ENCODE measurements at regions of chr6 and their contacts with region 1.

Region 1: DNA sequence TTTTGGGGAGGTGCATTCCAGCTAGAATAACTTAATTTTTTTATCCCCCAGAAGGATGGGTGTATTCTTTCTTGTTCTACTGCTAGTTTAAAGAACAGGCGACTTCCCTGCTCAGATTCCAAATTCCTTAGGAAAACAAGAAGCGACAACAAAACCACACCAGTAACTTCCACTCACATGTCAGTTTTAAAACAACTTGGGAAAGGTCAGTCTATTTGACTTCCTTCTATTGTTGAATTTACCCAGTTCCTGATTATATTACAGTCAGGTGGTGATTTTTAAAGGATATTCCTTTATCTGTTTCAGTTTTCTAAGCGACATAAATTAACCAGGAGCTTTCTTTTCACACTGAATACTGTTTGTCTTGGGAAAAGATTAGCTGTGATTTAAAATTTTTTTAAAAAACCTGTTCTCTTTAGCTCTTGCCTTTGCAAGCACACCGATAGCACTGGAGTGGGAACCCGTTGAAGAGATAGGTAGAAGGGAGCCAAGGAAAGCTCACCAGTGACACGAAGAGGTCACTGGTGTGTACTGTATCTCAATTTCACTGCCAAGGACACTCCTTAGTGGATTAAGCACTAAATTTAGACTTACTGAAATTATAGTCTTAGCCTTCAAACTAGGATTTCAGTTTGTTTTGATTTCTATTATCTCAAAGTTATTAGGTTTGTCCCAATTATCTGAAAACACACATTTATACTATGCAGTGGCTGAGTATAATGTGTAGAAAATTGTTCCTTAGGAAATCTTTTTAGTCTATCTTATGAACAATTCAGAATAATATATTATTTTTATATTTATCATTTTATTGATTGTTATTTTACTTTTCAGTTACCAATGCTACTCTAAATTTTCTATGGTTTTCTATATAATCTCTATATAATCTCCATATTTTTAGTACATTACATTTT is 22.3 kb downstream of the MARCKS start:
- DNase-seq: peak in 4 of 5 donors; percentile 36 to 54 (median 44)
- ATAC-seq: peak; percentile 96 to 99 (median 98)
- H3K4me3 ChIP-seq: peak overlapping the region in 8 of 12 donors; percentile 4 to 30 (median 20)
- H3K27ac ChIP-seq: peak overlapping the region in 10 of 12 donors; percentile 16 to 52 (median 44)
- H3K4me1 ChIP-seq: peaks cover 0 to 15% (median 2%) of the 10 kb centered on the region in 12 donors
- H3K27me3 ChIP-seq: no peaks in the 10 kb centered on the region
- CTCF ChIP-seq: peak; percentile 56 to 82 (median 68)
- POLR2A ChIP-seq: no peak

Region 2: DNA sequence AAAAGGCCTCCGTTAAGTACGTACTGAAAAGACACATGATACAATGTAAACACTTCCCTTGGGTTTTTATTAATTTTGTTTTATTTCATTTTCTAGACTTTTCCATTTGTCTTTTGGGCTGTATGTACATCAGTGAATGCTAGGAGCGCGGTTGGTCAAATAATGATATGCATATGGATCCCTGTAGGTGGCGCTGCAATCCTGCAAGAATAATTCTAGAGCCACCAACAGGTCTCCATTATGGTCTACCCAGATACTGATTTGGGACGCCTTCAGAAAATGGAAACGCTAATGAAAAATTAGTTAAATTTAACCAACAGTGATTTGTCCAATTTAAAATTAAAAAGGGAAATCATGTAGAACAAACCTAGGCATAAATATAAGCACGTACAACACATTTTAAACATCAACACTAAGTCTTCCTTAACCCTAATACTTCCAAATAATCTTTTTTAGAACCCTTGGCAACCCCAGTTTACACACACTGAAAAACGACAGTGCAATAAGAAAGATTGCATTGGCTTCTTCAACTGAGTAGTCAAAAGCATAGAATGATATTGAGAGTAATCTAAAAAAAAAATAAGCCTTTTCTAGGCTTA is 1098.8 kb before region 1 on chr6:
- intact Hi-C with region 1: loop called in 1 of 10 experiments (anchors 5 kb)
- DNase-seq: peak; percentile 52 to 79 (median 66)
- ATAC-seq: peak in 3 of 4 donors; percentile 86 to 93 (median 91)
- H3K4me3 ChIP-seq: no peak overlapping the region
- H3K27ac ChIP-seq: no peak overlapping the region
- H3K4me1 ChIP-seq: peaks cover 0 to 4% (median 0%) of the 10 kb centered on the region in 12 donors
- H3K27me3 ChIP-seq: no peaks in the 10 kb centered on the region
- CTCF ChIP-seq: peak; percentile 74 to 94 (median 84)
- POLR2A ChIP-seq: no peak

Region 3: DNA sequence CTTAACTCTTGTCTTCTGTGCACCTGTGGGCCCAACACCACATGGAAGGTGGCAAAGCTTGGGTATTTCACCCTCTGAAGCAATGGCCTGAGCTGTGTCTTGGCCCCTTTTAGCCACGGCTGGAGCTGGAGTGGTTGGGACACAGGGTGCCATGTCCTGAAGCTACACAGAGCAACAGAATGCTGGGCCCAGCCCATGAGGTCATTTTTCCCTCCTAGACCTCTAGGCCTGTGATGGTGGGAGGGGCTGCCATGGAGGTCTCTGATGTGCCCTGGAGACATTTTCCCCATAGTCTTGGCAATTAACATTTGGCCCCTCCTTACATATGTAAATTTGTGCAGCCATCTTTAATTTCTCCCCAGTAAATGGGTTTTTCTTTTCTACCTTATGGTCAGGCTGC is 911.5 kb before region 1 on chr6:
- intact Hi-C with region 1: no loop called
- DNase-seq: no peak
- ATAC-seq: no peak
- H3K4me3 ChIP-seq: no peak overlapping the region
- H3K27ac ChIP-seq: no peak overlapping the region
- H3K4me1 ChIP-seq: no peaks in the 10 kb centered on the region
- H3K27me3 ChIP-seq: no peaks in the 10 kb centered on the region
- CTCF ChIP-seq: no peak
- POLR2A ChIP-seq: no peak

Region 4: GRCh38 chr6:113969888-113970804 is 90.7 kb after region 1 on chr6:
- intact Hi-C with region 1: no loop called
- DNase-seq: peak; percentile 59 to 80 (median 64)
- ATAC-seq: peak in 3 of 4 donors; percentile 42 to 64 (median 61)
- H3K4me3 ChIP-seq: peak overlapping the region; percentile 84 to 100 (median 93)
- H3K27ac ChIP-seq: peak overlapping the region; percentile 81 to 97 (median 92)
- H3K4me1 ChIP-seq: peaks cover 3 to 48% (median 25%) of the 10 kb centered on the region in 12 donors
- H3K27me3 ChIP-seq: no peaks in the 10 kb centered on the region
- CTCF ChIP-seq: no peak
- POLR2A ChIP-seq: no peak

Measured in heart left ventricle (tissue), 16 donors.